CD8-positive, alpha-beta T cell (primary cell): ENCODE measurements at regions of chrX and their contacts with region 1.

Region 1: DNA sequence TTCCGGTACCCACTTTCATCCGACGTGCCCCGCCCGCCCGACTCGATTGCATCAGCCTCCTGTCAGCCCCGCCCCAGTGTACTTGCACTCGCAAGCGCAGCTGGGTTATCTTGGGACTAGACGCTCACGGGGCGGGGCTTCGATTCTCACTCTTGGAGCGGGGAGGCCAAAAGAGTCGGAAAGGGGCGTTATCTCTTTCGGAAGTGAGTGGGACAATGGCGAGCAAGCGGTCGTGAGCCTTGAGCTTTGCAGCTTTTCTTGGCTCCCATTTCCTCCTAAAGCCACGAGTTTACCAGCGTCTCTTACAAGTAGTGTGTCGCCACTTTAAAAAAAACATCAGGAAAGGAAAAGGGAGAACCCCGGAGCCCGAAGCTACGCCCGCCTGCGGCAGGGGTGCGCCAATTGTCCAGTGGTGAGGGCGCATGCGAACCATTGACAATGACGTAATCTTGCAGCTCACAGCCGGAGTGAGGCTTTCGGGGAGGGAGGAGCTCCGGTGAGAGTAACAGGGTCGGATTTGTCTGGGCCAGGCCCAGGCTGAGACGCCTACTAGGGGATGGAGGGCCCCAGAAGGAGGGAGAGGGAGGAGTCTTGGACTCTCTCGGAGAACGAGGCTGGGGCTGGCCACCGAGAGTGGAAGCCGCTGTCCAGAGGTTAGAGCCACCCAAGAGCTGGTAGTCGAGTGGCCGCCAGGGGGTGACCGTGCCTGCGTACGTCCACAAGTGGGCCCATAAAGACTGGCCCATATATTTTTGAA is 109.5 kb downstream of the GNL3L start:
- DNase-seq: peak; percentile 80 to 97 (median 92)
- ATAC-seq: peak; percentile 88
- H3K4me3 ChIP-seq: peak overlapping the region; percentile 60 to 94
- H3K4me3 Mint-ChIP-seq: peak overlapping the region; percentile 97
- H3K27ac ChIP-seq: peak overlapping the region; percentile 97 to 99
- H3K27ac Mint-ChIP-seq: peak overlapping the region; percentile 99
- H3K4me1 ChIP-seq: peaks cover 6% of the 10 kb centered on the region
- H3K4me1 Mint-ChIP-seq: peaks cover 9% of the 10 kb centered on the region
- H3K27me3 ChIP-seq: no peaks in the 10 kb centered on the region
- H3K27me3 Mint-ChIP-seq: no peaks in the 10 kb centered on the region
- CTCF ChIP-seq: peak; percentile 22

Region 2: DNA sequence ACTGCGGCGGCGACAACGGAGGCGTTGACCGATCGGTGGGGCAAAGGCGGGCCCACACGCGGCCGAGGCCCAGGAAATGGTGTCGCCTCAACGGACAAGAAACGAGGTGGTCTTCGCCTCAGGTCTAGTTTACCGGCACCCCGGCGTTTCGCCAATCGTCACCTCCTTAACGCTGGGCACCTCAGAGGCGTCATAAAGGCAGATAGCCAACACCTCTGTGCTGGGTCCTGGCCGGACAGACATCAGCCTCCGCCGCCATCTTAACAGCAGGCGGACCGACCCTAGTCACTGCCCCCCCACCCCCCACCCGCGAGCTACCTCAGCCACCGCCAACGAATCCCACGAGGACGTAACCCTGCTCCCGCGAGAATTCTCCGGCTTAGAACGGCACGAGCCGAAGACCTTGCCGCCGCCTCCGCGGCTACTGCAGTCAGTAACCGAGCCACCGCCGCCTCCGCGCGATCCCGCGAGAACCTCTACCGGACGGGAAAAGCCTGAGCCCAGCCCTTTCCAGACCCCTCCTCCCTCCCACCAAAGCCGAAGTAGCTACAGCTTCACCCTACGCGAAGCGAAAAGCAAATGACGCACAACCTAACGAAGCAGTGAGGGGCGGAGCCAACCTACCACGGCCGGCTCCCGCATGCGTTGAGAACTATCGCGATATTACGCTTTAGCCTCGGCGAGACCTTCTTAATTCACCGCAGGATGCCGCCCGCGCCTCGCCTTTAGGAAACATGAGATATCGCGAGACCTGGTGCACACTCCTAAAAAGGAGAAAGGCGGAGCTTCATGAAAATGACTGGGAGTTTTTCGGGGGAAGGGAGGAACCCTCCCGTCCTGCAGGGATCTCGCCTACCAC is 955.7 kb before region 1 on chrX:
- CTCF ChIA-PET with region 1: no interaction called
- POLR2A ChIA-PET with region 1: no interaction called
- intact Hi-C with region 1: loop called in 1 of 2 experiments (anchors 2 kb)
- DNase-seq: peak; percentile 75 to 98 (median 86)
- ATAC-seq: peak; percentile 78
- H3K4me3 ChIP-seq: peak overlapping the region; percentile 76 to 86
- H3K4me3 Mint-ChIP-seq: peak overlapping the region; percentile 88
- H3K27ac ChIP-seq: peak overlapping the region; percentile 94 to 97
- H3K27ac Mint-ChIP-seq: peak overlapping the region; percentile 97
- H3K4me1 ChIP-seq: peaks cover 31% of the 10 kb centered on the region
- H3K4me1 Mint-ChIP-seq: peaks cover 49% of the 10 kb centered on the region
- H3K27me3 ChIP-seq: no peaks in the 10 kb centered on the region
- H3K27me3 Mint-ChIP-seq: no peaks in the 10 kb centered on the region
- CTCF ChIP-seq: no peak

Region 3: DNA sequence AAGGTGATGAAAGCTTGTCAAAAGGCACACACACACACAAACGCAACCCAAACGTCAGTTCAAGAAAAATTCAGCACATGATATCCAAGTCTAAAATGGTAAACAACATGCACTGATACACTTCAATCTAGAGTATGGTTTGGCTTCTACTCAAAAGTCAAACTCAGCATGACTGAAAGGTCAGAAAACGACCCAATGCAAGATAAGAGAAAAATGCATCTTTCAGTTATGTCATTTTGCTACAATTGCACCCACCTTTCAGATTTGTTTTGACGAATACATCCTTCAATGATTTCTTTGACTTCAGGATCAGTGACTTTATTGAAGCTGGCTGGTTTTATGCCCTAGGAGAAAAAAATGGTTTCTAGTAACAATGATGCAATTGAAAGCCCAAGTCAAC is 338.0 kb before region 1 on chrX:
- CTCF ChIA-PET with region 1: no interaction called
- POLR2A ChIA-PET with region 1: no interaction called
- intact Hi-C with region 1: no loop called
- DNase-seq: no peak
- ATAC-seq: no peak
- H3K4me3 ChIP-seq: no peak overlapping the region
- H3K4me3 Mint-ChIP-seq: no peak overlapping the region
- H3K27ac ChIP-seq: no peak overlapping the region
- H3K27ac Mint-ChIP-seq: no peak overlapping the region
- H3K4me1 ChIP-seq: no peaks in the 10 kb centered on the region
- H3K4me1 Mint-ChIP-seq: no peaks in the 10 kb centered on the region
- H3K27me3 ChIP-seq: no peaks in the 10 kb centered on the region
- H3K27me3 Mint-ChIP-seq: peaks cover 2% of the 10 kb centered on the region
- CTCF ChIP-seq: no peak

Region 4: DNA sequence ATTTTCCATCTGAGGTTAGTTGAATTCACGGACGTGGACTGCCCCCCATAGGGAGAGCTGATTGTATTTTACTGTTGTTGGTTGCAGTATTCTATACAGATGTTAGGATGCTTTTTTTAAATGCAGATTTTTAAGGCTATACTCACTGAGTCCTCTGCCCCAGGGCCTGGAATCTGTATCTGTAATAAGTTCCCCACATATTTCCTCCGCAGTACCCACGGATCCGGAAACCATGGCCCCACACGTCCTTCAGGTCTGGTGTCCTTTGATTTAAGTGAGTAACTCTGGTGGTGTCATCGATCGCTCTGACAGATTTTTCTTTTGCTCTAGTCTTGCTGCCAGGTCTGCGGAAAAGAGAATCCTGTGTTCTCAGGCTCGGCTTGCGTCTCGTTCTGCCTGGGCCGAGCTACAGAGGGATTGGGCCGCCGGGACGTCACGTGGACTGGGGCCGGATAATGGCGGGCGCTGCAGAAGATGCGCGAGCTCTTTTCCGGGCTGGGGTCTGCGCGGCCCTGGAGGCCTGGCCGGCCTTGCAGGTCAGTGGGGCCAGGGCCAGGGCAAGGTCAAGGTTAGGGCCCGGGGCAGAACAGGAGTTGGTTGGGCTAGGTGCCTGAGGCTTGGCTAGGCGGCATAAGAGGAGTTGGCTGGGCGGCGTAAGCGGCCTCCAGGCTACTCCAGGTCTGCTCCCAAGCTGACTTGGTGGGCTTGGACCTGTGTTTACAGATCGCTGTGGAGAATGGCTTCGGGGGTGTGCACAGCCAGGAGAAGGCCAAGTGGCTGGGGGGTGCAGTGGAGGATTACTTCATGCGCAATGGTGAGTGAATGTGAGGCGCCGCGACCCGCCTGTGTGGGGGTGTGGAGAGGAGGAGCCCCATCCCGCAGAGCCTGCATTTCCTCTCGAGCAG is 199.3 kb before region 1 on chrX and contains the start of gene TSR2:
- CTCF ChIA-PET with region 1: no interaction called
- POLR2A ChIA-PET with region 1: interaction called, 6 read pairs
- intact Hi-C with region 1: loop called in 1 of 2 experiments (anchors 2 kb)
- DNase-seq: peak; percentile 55 to 90 (median 78)
- ATAC-seq: peak; percentile 93
- H3K4me3 ChIP-seq: peak within 1 kb of the TSS; percentile 93 to 96
- H3K4me3 Mint-ChIP-seq: peak within 1 kb of the TSS; percentile 92
- H3K27ac ChIP-seq: peak within 1 kb of the TSS; percentile 66 to 73
- H3K27ac Mint-ChIP-seq: peak within 1 kb of the TSS; percentile 91
- H3K4me1 ChIP-seq: peaks cover 21% of the 10 kb centered on the region
- H3K4me1 Mint-ChIP-seq: peaks cover 31% of the 10 kb centered on the region
- H3K27me3 ChIP-seq: no peaks in the 10 kb centered on the region
- H3K27me3 Mint-ChIP-seq: no peaks in the 10 kb centered on the region
- CTCF ChIP-seq: no peak
- total RNA-seq, gene TSR2: 38.7 to 41.4 TPM

Region 5: DNA sequence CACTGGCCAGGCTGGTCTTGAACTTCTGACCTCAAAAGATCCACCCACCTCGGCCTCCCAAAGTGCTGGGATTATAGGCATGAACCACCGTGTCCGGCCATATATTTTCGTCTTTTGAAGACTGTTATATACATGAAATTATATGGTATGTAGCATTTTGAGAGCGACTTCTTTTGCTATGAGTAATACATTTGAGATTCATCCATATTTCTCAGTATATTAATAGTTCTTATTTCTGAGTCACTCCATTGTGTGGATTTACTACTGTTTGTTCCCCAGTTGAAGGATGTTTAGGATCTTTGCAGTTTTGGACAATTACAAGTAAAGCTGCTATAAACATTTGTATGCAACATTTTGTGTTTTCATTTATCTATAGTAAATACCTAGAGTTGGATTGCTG is 74.6 kb before region 1 on chrX:
- CTCF ChIA-PET with region 1: no interaction called
- POLR2A ChIA-PET with region 1: no interaction called
- intact Hi-C with region 1: loop called in 1 of 2 experiments (anchors 10 kb)
- DNase-seq: no peak
- ATAC-seq: no peak
- H3K4me3 ChIP-seq: no peak overlapping the region
- H3K4me3 Mint-ChIP-seq: no peak overlapping the region
- H3K27ac ChIP-seq: no peak overlapping the region
- H3K27ac Mint-ChIP-seq: no peak overlapping the region
- H3K4me1 ChIP-seq: no peaks in the 10 kb centered on the region
- H3K4me1 Mint-ChIP-seq: no peaks in the 10 kb centered on the region
- H3K27me3 ChIP-seq: no peaks in the 10 kb centered on the region
- H3K27me3 Mint-ChIP-seq: no peaks in the 10 kb centered on the region
- CTCF ChIP-seq: no peak